ENCODE measurements at regions of chrX and their contacts with region 1.

Region 1: DNA sequence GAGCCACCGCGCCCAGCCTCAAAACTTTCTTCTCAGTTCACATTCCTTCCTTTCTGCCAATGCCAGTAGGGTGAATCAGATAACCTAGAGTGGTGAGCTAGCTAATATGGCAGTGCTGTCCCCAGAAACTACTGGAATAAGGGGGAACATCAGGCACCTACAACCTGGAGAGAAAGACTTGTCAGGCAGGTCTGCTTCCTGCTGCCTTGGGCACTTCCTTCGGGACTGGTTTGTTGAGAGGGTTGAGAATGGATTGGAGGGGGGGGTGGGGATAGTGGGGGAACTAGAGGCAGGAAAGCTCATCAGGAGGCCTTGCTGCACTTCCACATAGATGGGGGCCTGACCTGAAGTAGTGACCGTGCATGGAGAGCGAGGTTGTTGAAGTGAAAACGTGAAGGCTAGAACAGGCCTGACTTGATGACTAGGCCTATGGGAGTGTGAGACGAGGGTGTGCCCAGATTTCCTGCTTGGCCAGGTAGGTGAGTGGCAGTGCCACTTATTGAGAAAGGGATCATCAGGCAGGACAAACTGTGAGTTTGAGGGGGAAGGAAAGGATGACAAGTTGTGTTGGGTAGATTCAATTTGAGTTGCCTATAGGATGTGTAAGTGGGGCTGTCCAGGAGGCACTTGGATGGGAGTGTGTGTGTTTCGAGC is 33.4 kb downstream of the SLC25A5 start:
- DNase-seq: no peak
- ATAC-seq: no peak
- H3K4me3 ChIP-seq: no peak overlapping the region
- H3K27ac ChIP-seq: no peak overlapping the region
- H3K4me1 ChIP-seq: no peaks in the 10 kb centered on the region
- H3K27me3 ChIP-seq: no peaks in the 10 kb centered on the region
- CTCF ChIP-seq: no peak
- EP300 ChIP-seq: no peak
- POLR2A ChIP-seq: no peak
- RAD21 ChIP-seq: no peak

Region 2: DNA sequence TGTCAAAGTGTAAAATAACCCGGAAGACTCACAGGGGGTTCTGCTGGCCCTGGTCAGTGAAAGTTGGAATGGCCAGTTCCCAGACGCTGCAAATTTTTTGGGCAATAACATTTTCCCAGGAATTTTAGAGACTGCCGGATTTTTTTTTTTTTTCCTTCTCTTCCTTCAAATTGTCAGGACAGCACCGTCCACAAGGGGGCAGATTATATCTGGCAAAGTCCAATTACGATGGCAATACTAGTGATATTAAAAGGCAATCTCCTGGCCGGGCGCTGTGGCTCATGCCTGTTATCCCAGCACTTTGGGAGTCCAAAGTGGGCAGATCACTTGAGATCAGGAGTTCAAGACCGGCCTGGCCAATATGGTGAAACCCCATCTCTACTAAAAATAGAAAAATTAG is 12.9 kb before region 1 on chrX:
- CTCF ChIA-PET with region 1: interaction called, 14 read pairs
- POLR2A ChIA-PET with region 1: interaction called, 5 read pairs
- RAD21 ChIA-PET with region 1: interaction called, 4 read pairs
- SMC1A ChIA-PET with region 1: interaction called, 3 read pairs
- in situ Hi-C with region 1: no loop called
- intact Hi-C with region 1: no loop called
- DNase-seq: no peak
- ATAC-seq: peak; percentile 64
- H3K4me3 ChIP-seq: no peak overlapping the region
- H3K27ac ChIP-seq: no peak overlapping the region
- H3K4me1 ChIP-seq: no peaks in the 10 kb centered on the region
- H3K27me3 ChIP-seq: no peaks in the 10 kb centered on the region
- CTCF ChIP-seq: peak; percentile 50 to 60 (median 58)
- EP300 ChIP-seq: no peak
- POLR2A ChIP-seq: no peak
- RAD21 ChIP-seq: peak; percentile 51; the same call in 1 of the 2 replicates

Region 3: DNA sequence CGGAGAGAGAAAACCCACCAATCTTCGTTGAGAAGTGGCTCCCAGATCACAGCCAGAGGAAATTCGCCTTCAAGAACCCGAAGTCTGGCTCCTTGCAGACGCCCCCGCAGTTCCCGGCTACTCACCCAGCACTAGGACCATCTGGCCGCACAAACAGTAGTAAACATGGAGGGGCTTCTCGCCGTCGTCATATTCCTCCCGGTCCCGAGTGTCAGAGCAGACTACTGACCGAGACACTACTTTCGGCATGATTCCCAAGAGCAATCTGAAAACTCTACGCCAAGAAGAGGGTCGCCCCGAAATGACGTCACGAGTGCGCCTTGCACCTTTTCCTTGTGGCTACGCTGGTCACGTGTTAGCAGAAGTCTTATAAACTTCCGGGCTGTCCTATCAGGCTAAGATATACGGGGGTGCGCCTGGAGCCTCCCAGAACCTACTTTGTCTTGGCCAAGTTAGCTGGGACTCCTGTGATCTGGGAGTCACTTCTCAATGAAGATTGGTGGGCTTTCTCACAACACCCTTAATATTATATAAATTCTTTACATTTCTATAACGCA is 63.5 kb after region 1 on chrX and contains the start of gene STEEP1:
- CTCF ChIA-PET with region 1: no interaction called
- POLR2A ChIA-PET with region 1: no interaction called
- RAD21 ChIA-PET with region 1: no interaction called
- SMC1A ChIA-PET with region 1: no interaction called
- in situ Hi-C with region 1: no loop called
- intact Hi-C with region 1: no loop called
- DNase-seq: peak; percentile 71
- ATAC-seq: peak; percentile 97
- H3K4me3 ChIP-seq: peak within 1 kb of the TSS; percentile 60
- H3K27ac ChIP-seq: peak within 1 kb of the TSS; percentile 50; the same call in 1 of the 2 replicates
- H3K4me1 ChIP-seq: no peaks in the 10 kb centered on the region
- H3K27me3 ChIP-seq: no peaks in the 10 kb centered on the region; a peak in 1 of 4 replicates
- CTCF ChIP-seq: no peak
- EP300 ChIP-seq: 0 out of 4 replicates have a peak, but pooled peaks of 1 of the 2 experiments have one; percentile 11
- POLR2A ChIP-seq: peak; percentile 61
- RAD21 ChIP-seq: no peak
- polyA plus RNA-seq, gene STEEP1: 15.1 to 17.8 TPM

Region 4: DNA sequence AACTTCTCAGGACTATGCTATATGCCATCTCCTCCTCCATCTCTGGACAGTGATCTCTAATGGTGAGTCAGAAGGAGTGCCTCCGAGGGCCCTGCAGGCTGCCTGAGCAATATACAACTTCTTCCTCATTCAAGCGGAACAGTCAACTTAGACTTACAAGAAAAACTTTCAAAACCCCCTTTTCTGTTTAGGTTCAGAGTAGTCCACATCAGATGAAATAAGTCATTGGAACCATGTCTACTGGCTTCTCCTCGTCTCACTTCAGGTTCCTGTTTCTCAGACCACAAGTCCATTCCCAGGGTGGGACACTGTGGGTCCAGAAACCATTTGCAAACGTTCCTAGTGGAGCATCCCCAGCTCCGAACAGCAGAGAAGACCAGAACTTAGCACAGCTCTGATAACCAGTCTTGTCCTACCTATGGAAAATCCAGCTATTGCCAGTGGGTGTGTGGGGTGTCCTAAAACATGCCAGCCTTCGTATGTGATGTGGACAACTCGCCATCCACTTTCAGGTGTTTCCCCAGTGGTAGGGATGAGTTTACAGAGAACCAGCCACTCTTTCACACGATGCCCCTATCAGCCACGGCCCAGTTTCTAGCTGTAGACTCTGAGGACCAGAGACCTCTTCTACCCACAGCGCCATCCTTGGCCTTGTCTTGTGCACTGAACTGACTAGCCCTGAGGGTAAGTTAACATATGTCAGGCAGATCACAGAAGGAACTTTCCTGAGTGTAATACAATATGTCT is 137.3 kb after region 1 on chrX:
- CTCF ChIA-PET with region 1: no interaction called
- POLR2A ChIA-PET with region 1: no interaction called
- RAD21 ChIA-PET with region 1: no interaction called
- SMC1A ChIA-PET with region 1: no interaction called
- in situ Hi-C with region 1: no loop called
- intact Hi-C with region 1: no loop called
- DNase-seq: peak; percentile 81
- ATAC-seq: peak; percentile 84
- H3K4me3 ChIP-seq: no peak overlapping the region
- H3K27ac ChIP-seq: peak overlapping the region; percentile 67
- H3K4me1 ChIP-seq: peaks cover 61% of the 10 kb centered on the region
- H3K27me3 ChIP-seq: no peaks in the 10 kb centered on the region
- CTCF ChIP-seq: 0 out of 6 replicates have a peak, but pooled peaks of 1 of the 3 experiments have one; percentile 10
- EP300 ChIP-seq: no peak
- POLR2A ChIP-seq: no peak
- RAD21 ChIP-seq: no peak

Region 5: GRCh38 chrX:121365572-121366161 is 1864.0 kb after region 1 on chrX:
- CTCF ChIA-PET with region 1: no interaction called
- POLR2A ChIA-PET with region 1: no interaction called
- RAD21 ChIA-PET with region 1: no interaction called
- SMC1A ChIA-PET with region 1: no interaction called
- in situ Hi-C with region 1: no loop called
- intact Hi-C with region 1: no loop called
- DNase-seq: no peak
- ATAC-seq: no peak
- H3K4me3 ChIP-seq: no peak overlapping the region
- H3K27ac ChIP-seq: no peak overlapping the region
- H3K4me1 ChIP-seq: no peaks in the 10 kb centered on the region
- H3K27me3 ChIP-seq: no peaks in the 10 kb centered on the region
- CTCF ChIP-seq: no peak
- EP300 ChIP-seq: no peak
- POLR2A ChIP-seq: no peak
- RAD21 ChIP-seq: no peak